Activated CD4-positive, alpha-beta T cell treated with anti-CD3 and anti-CD28 coated beads, Interleukin-2, amount 10 ng/mL, durations not matched to agents 24 days and 14 days (primary cell): ENCODE measurements at regions of chr9 and their contacts with region 1.

Region 1: GRCh38 chr9:15211160-15211814 is 95.7 kb downstream of the TTC39B start:
- DNase-seq: peak; percentile 90
- H3K4me3 Mint-ChIP-seq: no peak overlapping the region
- H3K27ac Mint-ChIP-seq: peak overlapping the region; percentile 20
- H3K4me1 Mint-ChIP-seq: peaks cover 19% of the 10 kb centered on the region
- H3K27me3 Mint-ChIP-seq: no peaks in the 10 kb centered on the region

Region 2: GRCh38 chr9:15191378-15191777 is 19.9 kb before region 1 on chr9:
- intact Hi-C with region 1: loop called (anchors 1 kb)
- DNase-seq: peak; percentile 73
- H3K4me3 Mint-ChIP-seq: peak overlapping the region; percentile 12
- H3K27ac Mint-ChIP-seq: no peak overlapping the region
- H3K4me1 Mint-ChIP-seq: peaks cover 15% of the 10 kb centered on the region
- H3K27me3 Mint-ChIP-seq: no peaks in the 10 kb centered on the region

Region 3: DNA sequence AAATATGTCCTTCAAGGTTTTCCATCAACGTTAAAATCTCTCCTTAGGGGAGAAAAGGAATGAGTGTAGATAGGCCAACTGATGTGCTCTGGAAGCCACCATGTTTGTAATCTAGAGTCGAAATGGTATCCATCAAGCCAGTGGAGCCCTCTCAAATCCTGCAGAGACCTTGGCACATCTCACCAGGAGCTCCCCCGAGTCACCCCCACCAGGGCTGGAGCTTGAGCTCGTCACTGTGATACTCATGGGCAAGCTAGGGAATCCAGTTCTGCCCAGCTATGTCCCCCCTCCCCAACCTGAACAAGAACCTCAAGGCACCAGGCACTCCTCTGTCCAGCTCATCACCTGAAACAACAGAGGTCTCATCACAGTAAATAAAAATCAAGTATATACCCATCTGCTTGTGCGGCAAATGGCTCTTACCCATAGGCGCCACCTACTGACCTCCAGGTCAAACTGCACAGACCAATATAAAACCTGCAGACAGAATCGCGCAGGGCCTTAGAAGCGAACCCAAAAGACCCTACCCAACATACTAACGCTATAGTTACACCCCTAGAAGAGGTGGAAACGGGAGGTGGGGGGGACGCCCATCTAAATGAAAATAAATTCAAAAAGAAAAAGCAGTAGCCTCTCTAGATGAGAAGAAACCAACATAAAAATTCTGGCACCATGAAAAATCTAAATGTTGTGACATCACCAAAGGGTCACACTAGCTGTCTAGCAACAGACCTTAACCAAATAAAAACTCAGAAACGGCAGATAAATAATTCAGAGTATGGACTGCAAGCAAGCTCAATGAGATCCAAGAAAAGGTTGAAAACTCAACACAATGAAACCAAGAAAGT is 20.7 kb after region 1 on chr9:
- intact Hi-C with region 1: loop called (anchors 1 kb)
- DNase-seq: no peak
- H3K4me3 Mint-ChIP-seq: no peak overlapping the region
- H3K27ac Mint-ChIP-seq: no peak overlapping the region
- H3K4me1 Mint-ChIP-seq: peaks cover 27% of the 10 kb centered on the region
- H3K27me3 Mint-ChIP-seq: no peaks in the 10 kb centered on the region

Region 4: GRCh38 chr9:15416880-15417279 is 205.6 kb after region 1 on chr9:
- intact Hi-C with region 1: loop called (anchors 1 kb)
- DNase-seq: peak; percentile 83
- H3K4me3 Mint-ChIP-seq: no peak overlapping the region
- H3K27ac Mint-ChIP-seq: no peak overlapping the region
- H3K4me1 Mint-ChIP-seq: peaks cover 10% of the 10 kb centered on the region
- H3K27me3 Mint-ChIP-seq: peaks cover 11% of the 10 kb centered on the region

Region 5: DNA sequence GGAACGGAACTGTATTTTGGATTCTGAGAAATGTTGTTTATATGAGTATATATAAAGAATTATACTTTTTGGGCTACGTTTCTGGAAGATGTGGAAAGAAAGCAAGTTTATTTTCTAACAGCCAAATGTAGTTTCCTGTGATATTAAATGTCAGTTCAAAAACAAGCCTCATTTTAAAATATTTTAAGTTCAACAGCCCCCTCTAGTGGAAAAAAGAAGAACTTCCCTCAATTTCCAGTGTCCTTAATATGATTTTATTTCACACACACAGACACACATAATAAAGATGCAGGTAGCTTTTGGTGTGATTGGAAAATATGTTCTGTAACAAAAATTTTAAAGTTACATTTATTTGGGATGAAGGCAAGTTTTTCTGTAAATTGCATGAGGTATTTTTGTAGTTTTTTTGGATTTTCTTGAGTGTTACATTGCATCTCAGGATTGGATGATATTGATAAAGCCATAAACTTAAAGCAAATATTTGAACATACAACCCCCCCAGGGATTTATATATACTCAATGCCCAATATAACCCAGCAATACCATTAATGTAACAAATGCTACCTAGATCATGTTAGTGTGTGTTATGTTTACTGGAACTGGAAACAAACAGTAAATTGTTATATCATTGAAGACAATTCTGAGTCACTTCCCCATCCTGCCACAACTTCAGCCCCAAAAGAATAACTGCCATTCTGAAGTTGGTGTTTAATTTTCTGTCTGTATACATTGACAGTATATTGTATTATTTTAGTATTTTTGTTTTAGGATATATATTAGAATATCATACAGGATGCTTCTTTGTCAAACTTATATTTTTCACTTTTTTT is 395.6 kb after region 1 on chr9:
- intact Hi-C with region 1: loop called (anchors 5 kb)
- DNase-seq: peak; percentile 78
- H3K4me3 Mint-ChIP-seq: no peak overlapping the region
- H3K27ac Mint-ChIP-seq: no peak overlapping the region
- H3K4me1 Mint-ChIP-seq: peaks cover 5% of the 10 kb centered on the region
- H3K27me3 Mint-ChIP-seq: no peaks in the 10 kb centered on the region